ENCODE measurements at regions of chr11 and their contacts with region 1.

Region 1: GRCh38 chr11:9137293-9138132 is 46.1 kb upstream of the SCUBE2 start:
- DNase-seq: peak; percentile 81 to 92
- ATAC-seq: peak; percentile 89
- H3K4me3 ChIP-seq: no peak overlapping the region
- H3K27ac ChIP-seq: peak overlapping the region in 1 of 2 donors; percentile 68
- H3K4me1 ChIP-seq: peaks cover 0 to 4% of the 10 kb centered on the region in 2 donors
- H3K27me3 ChIP-seq: no peaks in the 10 kb centered on the region

Region 2: DNA sequence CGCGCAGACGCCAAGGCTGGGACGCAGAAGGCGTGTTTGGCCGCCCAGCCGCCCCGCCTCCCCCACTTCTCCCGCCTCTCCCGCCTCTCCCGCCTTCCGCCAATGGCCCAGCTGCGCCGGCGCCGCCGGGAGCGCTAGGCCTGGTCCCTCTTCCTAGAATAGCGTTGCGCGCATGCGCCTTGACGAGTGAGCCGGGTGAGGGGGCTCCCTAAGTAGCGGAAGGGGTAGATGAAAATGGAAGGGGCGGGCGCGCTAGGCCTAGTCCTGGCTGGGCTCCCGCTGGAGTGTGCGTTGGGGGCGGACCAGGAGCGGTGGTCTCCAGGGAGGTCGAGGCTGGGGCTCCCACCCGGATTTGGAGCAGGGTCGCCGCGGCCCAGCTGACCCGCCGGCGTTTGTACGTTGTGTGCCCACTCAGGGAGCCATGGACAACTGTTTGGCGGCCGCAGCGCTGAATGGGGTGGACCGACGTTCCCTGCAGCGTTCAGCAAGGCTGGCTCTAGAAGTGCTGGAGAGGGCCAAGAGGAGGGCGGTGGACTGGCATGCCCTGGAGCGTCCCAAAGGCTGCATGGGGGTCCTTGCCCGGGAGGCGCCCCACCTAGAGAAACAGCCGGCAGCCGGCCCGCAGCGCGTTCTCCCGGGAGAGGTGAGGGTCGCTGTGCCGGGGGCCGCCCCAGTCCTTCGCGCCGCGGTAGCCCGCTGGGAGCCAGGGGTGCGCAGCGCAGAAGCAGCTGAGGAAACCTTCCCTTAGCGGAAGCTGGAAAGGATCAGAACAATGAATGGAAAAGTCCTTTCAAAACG is 226.3 kb before region 1 on chr11 and contains the start of gene AKIP1:
- intact Hi-C with region 1: loop called (anchors 2 to 5 kb)
- DNase-seq: peak; percentile 98 to 99
- ATAC-seq: peak; percentile 98
- H3K4me3 ChIP-seq: peak within 1 kb of the TSS; percentile 43 to 52
- H3K27ac ChIP-seq: peak within 1 kb of the TSS; percentile 43 to 92
- H3K4me1 ChIP-seq: peaks cover 0 to 5% of the 10 kb centered on the region in 2 donors
- H3K27me3 ChIP-seq: no peaks in the 10 kb centered on the region
- total RNA-seq, gene AKIP1: 15.6 to 25.3 TPM

Region 3: GRCh38 chr11:9015677-9016076 is 121.8 kb before region 1 on chr11:
- intact Hi-C with region 1: loop called (anchors 2 kb)
- DNase-seq: peak in 1 of 2 donors; percentile 77
- ATAC-seq: peak; percentile 74
- H3K4me3 ChIP-seq: no peak overlapping the region
- H3K27ac ChIP-seq: no peak overlapping the region
- H3K4me1 ChIP-seq: no peaks in the 10 kb centered on the region
- H3K27me3 ChIP-seq: peaks cover 0 to 2% of the 10 kb centered on the region in 2 donors

Region 4: DNA sequence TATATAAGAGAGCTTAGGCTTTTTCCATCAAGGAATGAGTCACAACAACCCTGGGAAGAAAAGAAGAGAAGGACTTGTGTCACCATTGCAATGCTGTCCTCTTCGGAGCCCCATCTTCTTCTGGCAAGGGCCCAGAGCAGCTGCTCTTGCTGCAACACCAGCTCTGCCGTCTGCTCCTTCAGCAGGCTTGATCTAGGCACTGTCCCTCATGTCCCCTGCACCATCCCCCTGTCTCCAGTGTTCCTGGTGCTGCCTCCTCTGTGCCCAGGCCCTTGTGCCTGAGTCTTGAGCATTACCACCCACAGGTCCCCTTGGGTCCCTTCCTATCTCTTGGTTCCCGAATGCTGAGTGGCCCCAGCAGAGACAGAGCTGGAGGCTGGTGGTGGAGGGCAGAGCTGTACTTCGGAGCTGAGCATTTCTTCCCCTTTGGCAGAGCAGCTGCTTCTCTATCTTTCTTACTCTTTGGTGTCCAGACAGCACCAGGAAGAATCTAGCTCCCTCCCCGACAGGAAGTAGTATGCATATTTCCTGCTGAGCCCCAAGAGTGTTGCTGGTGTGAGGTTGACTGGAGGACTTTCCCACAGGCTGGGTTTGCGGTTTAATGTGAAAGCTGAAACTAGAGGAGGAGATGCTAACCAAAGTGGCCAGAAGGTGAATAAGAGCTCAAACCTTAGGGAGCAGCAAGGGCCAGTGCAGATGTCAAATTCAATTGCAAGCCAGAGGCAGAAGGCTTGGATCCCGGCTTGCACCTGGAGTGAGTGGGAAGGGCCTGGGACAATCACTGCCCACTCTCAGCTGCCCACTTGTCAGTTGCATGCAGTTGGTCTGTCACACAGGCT is 463.7 kb after region 1 on chr11:
- intact Hi-C with region 1: no loop called
- DNase-seq: no peak
- ATAC-seq: peak; percentile 23
- H3K4me3 ChIP-seq: no peak overlapping the region
- H3K27ac ChIP-seq: no peak overlapping the region
- H3K4me1 ChIP-seq: no peaks in the 10 kb centered on the region
- H3K27me3 ChIP-seq: no peaks in the 10 kb centered on the region